Activated T-helper 1 cell treated with anti-CD3 and anti-CD28 coated beads, Interleukin-12 subunit alpha, Interleukin-12 subunit beta, Interleukin-2, Interleukin-4 antibody, amounts not matched to agents 30 ng/mL and 10 ng/mL and 1 ng/mL, durations not matched to agents 14 hours and 24 hours and 36 hours (primary cell): ENCODE measurements at regions of chr17 and their contacts with region 1.

Region 1: GRCh38 chr17:12118617-12119016 is 97.9 kb downstream of the MAP2K4 start:
- DNase-seq: no peak
- H3K4me3 Mint-ChIP-seq: no peak overlapping the region
- H3K27ac Mint-ChIP-seq: no peak overlapping the region
- H3K4me1 Mint-ChIP-seq: no peaks in the 10 kb centered on the region
- H3K27me3 Mint-ChIP-seq: no peaks in the 10 kb centered on the region

Region 2: DNA sequence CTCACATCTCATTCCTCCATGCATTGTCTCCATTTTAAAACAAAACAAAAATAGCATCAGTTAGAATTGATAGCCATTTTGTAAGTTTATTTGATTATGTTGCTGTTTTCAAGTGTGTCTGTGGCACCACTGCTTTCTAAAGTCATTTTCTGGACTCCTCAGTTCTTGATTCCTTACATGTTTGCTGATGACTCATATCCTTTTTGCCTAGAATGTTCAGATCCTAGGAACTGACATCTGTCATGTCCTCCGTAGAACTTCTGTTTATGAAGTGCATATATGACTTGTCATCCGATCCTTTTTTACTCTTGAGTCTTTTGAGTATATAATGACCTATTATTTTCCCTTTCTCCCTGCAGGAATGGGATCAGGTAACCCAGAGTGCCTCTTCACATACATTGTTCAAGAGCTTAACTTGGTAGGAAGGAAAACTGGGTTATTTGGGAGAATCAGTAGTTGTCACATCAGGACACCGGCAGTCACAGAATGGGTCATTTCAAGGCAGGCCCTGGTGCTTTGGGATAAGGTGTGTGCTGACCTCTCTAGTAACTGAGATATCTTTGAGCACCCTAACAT is 28.7 kb before region 1 on chr17:
- intact Hi-C with region 1: no loop called
- DNase-seq: no peak
- H3K4me3 Mint-ChIP-seq: no peak overlapping the region
- H3K27ac Mint-ChIP-seq: no peak overlapping the region
- H3K4me1 Mint-ChIP-seq: peaks cover 15% of the 10 kb centered on the region
- H3K27me3 Mint-ChIP-seq: no peaks in the 10 kb centered on the region

Region 3: GRCh38 chr17:13415807-13416416 is 1297.3 kb after region 1 on chr17:
- intact Hi-C with region 1: loop called (anchors 10 kb)
- DNase-seq: no peak
- H3K4me3 Mint-ChIP-seq: no peak overlapping the region
- H3K27ac Mint-ChIP-seq: no peak overlapping the region
- H3K4me1 Mint-ChIP-seq: no peaks in the 10 kb centered on the region
- H3K27me3 Mint-ChIP-seq: no peaks in the 10 kb centered on the region